B cell (primary cell): ENCODE measurements at regions of chr7 and their contacts with region 1.

Region 1: GRCh38 chr7:102272075-102272917 is 14.4 kb upstream of the SH2B2 start:
- DNase-seq: peak; percentile 79
- ATAC-seq: peak; percentile 87
- H3K4me3 ChIP-seq: no peak overlapping the region
- H3K4me3 Mint-ChIP-seq: no peak overlapping the region
- H3K27ac ChIP-seq: no peak overlapping the region
- H3K27ac Mint-ChIP-seq: no peak overlapping the region
- H3K4me1 ChIP-seq: peaks cover 0 to 3% of the 10 kb centered on the region in 2 donors
- H3K4me1 Mint-ChIP-seq: peaks cover 2% of the 10 kb centered on the region
- H3K27me3 ChIP-seq: no peaks in the 10 kb centered on the region
- H3K27me3 Mint-ChIP-seq: no peaks in the 10 kb centered on the region
- CTCF ChIP-seq: peak; percentile 95

Region 2: GRCh38 chr7:101542527-101543241 is 729.6 kb before region 1 on chr7:
- CTCF ChIA-PET with region 1: interaction called, 99 read pairs
- POLR2A ChIA-PET with region 1: no interaction called
- intact Hi-C with region 1: no loop called
- DNase-seq: peak; percentile 77
- ATAC-seq: peak; percentile 68
- H3K4me3 ChIP-seq: no peak overlapping the region
- H3K4me3 Mint-ChIP-seq: no peak overlapping the region
- H3K27ac ChIP-seq: no peak overlapping the region
- H3K27ac Mint-ChIP-seq: no peak overlapping the region
- H3K4me1 ChIP-seq: no peaks in the 10 kb centered on the region
- H3K4me1 Mint-ChIP-seq: no peaks in the 10 kb centered on the region
- H3K27me3 ChIP-seq: peaks cover 0 to 10% (median 1%) of the 10 kb centered on the region in 4 experiments
- H3K27me3 Mint-ChIP-seq: peaks cover 5% of the 10 kb centered on the region
- CTCF ChIP-seq: peak; percentile 88

Region 3: DNA sequence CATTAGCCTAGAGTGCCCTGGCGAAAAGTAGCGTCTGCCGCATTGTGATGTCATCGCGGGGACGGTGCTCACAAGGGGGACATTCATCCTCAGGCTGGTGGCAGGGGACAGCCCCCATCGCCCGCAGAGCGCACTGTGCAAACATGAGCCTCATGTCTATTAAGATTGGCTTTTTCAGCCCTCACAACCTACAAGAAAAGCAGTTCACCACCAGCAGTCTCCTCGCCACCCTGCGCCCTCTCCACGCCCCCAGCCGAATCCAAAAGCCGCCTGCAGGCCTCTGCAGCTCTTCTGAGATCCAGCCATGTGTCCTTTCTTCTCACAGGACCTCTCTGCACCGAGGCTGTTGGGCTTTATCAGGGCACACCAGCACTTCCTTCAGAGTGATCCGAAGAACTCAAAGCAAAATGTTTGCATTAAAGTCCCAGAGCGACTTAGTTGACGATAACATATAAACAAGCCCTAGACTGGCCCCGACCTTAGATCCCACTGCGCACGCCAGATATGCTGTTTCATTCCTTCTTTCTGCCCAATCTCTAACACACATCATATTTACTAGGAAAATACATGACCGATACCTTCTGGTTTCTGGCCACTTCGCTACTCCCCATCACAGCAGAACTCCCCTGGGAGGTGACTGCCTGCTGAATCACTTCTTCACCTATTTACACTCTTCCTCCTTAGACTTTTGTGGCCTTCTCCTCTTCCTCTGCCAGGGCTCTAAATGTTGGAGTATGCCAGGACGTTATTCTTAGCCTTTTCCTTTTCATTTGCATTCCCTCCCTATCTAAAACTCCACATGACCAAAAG is 191.7 kb before region 1 on chr7:
- CTCF ChIA-PET with region 1: no interaction called
- POLR2A ChIA-PET with region 1: no interaction called
- intact Hi-C with region 1: no loop called
- DNase-seq: no peak
- ATAC-seq: no peak
- H3K4me3 ChIP-seq: no peak overlapping the region
- H3K4me3 Mint-ChIP-seq: no peak overlapping the region
- H3K27ac ChIP-seq: no peak overlapping the region
- H3K27ac Mint-ChIP-seq: no peak overlapping the region
- H3K4me1 ChIP-seq: no peaks in the 10 kb centered on the region
- H3K4me1 Mint-ChIP-seq: peaks cover 5% of the 10 kb centered on the region
- H3K27me3 ChIP-seq: no peaks in the 10 kb centered on the region
- H3K27me3 Mint-ChIP-seq: no peaks in the 10 kb centered on the region
- CTCF ChIP-seq: no peak

Region 4: DNA sequence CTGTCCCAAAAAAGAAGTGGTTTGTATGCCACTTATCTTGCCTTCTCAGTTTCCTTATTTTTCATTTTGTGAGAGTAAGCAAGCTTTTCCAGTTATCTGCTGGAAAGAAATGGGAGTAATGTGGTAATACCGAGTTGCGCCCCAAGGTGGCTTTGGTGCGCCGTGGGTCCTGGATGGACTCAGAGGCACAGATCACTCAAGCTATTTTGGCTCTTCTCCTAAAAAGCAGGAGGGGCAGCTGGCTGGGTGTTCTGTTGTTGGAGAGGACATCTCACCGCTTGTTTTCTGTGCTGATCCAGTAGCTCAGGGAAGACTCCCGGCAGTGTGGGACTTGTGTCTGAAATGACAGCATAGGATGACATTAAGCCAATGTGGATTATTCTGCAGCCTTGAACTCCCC is 140.3 kb after region 1 on chr7:
- CTCF ChIA-PET with region 1: no interaction called
- POLR2A ChIA-PET with region 1: no interaction called
- intact Hi-C with region 1: no loop called
- DNase-seq: peak; percentile 67
- ATAC-seq: no peak
- H3K4me3 ChIP-seq: no peak overlapping the region
- H3K4me3 Mint-ChIP-seq: no peak overlapping the region
- H3K27ac ChIP-seq: no peak overlapping the region
- H3K27ac Mint-ChIP-seq: peak overlapping the region; percentile 34
- H3K4me1 ChIP-seq: peaks cover 58 to 76% of the 10 kb centered on the region in 2 donors
- H3K4me1 Mint-ChIP-seq: peaks cover 77% of the 10 kb centered on the region
- H3K27me3 ChIP-seq: no peaks in the 10 kb centered on the region
- H3K27me3 Mint-ChIP-seq: no peaks in the 10 kb centered on the region
- CTCF ChIP-seq: peak; percentile 68